PC-9 (cell line): ENCODE measurements at regions of chr11 and their contacts with region 1.

Region 1: DNA sequence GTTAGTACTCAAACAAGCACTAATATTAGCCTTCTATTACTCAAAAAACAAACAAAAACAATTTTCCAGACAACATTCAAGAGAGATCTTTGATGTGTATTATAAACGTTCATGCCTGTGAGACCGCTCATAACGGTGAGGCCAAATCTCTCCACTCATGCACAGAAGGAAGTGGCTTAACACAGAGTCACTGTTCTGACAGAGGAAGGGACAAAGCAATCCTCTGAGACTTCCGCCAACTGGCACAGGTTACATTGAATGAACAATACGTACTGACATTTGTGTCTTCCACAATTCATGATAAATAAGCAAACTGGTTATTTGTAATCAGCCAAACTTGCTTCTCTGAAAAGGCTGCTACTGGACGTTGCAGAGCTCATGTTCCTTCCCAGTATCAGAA is 30.5 kb downstream of the CHKA start:
- DNase-seq: no peak
- H3K4me3 ChIP-seq: no peak overlapping the region
- H3K27ac ChIP-seq: no peak overlapping the region
- H3K4me1 ChIP-seq: no peaks in the 10 kb centered on the region
- H3K27me3 ChIP-seq: no peaks in the 10 kb centered on the region
- CTCF ChIP-seq: no peak

Region 2: GRCh38 chr11:68524213-68524612 is 433.5 kb after region 1 on chr11:
- CTCF ChIA-PET with region 1: no interaction called
- POLR2A ChIA-PET with region 1: interaction called, 16 read pairs
- intact Hi-C with region 1: no loop called
- DNase-seq: no peak
- H3K4me3 ChIP-seq: no peak overlapping the region
- H3K27ac ChIP-seq: no peak overlapping the region
- H3K4me1 ChIP-seq: no peaks in the 10 kb centered on the region
- H3K27me3 ChIP-seq: no peaks in the 10 kb centered on the region
- CTCF ChIP-seq: no peak

Region 3: DNA sequence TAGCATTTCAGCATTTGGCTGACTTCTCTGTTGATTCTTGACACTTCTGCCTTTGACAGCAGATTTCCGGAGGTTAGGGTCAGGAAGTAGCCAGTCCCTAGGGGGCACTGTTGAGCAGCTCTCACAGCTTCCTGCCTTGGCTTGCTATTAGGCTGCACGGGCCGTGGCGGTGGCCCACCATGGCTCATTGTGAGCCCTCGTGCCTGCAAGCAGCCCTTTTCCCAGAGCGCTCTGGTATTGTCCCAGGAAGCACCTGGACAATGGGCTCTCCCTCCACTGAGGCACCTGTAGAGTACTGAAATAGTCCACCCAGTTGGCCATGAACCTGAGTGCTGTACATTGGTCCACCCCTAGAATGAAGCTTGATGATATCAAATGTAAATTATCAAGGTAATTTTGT is 493.4 kb after region 1 on chr11:
- CTCF ChIA-PET with region 1: interaction called, 17 read pairs
- POLR2A ChIA-PET with region 1: no interaction called
- intact Hi-C with region 1: no loop called
- DNase-seq: peak in 1 of 2 experiments; percentile 22
- H3K4me3 ChIP-seq: no peak overlapping the region
- H3K27ac ChIP-seq: no peak overlapping the region
- H3K4me1 ChIP-seq: no peaks in the 10 kb centered on the region
- H3K27me3 ChIP-seq: no peaks in the 10 kb centered on the region
- CTCF ChIP-seq: peak; percentile 78

Region 4: GRCh38 chr11:68855205-68855981 is 764.7 kb after region 1 on chr11:
- CTCF ChIA-PET with region 1: interaction called, 10 read pairs
- POLR2A ChIA-PET with region 1: no interaction called
- intact Hi-C with region 1: no loop called
- DNase-seq: no peak
- H3K4me3 ChIP-seq: no peak overlapping the region
- H3K27ac ChIP-seq: no peak overlapping the region
- H3K4me1 ChIP-seq: peaks cover 18% of the 10 kb centered on the region
- H3K27me3 ChIP-seq: 0 out of 2 replicates have a peak, but pooled peaks cover 4% of the 10 kb centered on the region
- CTCF ChIP-seq: no peak

Region 5: DNA sequence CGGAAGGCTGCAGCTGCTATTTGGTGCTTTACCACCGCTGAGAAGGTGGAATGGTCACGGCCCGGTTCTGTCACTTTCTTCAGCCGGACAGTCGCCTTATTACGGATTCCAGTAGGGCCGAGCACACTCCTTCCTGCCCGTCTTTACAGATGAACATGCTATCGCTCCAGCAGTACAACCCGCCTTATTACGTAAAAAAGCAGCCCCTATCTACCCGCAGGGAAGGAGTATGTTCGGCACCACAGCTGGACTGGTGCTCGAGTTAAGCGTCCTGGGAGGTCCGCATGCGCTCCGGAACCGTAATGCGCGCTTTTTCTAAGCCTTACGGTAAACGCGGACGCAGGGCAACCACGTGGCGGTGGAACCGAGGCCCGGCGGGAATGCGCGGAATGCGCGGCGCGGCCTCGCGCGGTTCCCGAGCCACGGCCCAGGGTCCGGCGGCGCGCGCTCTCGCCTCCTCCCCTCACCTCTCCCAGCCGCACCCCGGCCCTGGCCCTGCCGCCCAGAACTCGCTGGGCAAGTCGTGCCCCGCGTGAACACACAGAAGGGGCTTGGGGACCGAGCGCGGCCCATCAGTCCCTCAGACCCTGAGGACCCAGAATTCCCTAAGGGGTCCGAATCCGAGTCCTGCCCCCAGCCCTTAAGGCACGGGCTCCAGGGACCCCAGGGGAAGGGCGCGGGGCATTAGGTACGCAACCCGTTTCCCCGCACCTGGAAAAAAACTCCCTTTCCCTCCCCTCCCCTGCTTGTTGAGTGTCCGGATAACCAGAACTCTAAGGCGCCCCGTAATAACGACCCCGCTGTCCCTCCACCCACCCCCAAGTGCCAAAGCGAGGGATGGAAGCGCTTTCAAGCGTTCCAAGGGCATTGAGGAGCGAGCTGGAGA is 1545.8 kb after region 1 on chr11:
- CTCF ChIA-PET with region 1: no interaction called
- POLR2A ChIA-PET with region 1: interaction called, 14 read pairs
- intact Hi-C with region 1: no loop called
- DNase-seq: peak; percentile 73 to 94
- H3K4me3 ChIP-seq: peak overlapping the region; percentile 99
- H3K27ac ChIP-seq: peak overlapping the region; percentile 93
- H3K4me1 ChIP-seq: peaks cover 22% of the 10 kb centered on the region; the same call in 1 of the 2 replicates
- H3K27me3 ChIP-seq: no peaks in the 10 kb centered on the region
- CTCF ChIP-seq: no peak